CD4-positive, alpha-beta memory T cell (primary cell): ENCODE measurements at regions of chr3 and their contacts with region 1.

Region 1: DNA sequence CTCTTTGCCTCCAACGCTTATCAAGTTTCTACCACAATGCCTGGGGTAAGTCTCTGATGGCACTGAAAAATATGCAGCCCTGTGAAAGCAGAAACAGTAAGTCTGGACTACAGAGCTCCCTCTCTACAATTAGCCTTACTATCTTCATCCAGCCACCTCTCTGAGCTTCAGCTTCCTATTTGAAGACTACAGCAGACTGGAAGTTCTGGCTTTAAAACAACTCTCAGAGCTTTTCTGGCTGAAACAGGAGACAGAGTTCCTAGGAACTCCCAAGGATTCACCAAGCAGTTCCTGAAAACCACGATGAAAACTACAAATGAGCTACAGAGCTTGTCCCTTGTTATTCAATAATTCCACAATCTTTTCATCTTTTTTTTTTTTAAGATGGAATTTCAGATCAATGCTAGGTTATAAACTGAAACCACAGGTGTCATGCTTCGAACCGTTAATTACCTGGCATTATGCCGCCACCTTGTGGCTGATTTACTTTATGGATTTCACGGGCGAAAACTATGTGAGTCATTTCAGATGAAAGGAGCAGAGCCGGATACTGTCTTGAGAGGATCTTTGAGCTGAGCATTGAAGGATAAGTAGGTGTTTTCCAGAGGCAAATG is 3.9 kb downstream of the CRYGS start:
- DNase-seq: peak; percentile 78 to 85 (median 82)
- H3K4me3 ChIP-seq: no peak overlapping the region
- H3K4me3 Mint-ChIP-seq: peak overlapping the region in 3 of 8 donors; percentile 2 to 48 (median 36)
- H3K27ac ChIP-seq: no peak overlapping the region
- H3K27ac Mint-ChIP-seq: peak overlapping the region in 6 of 7 donors; percentile 11 to 53 (median 47)
- H3K4me1 ChIP-seq: peaks cover 9% of the 10 kb centered on the region
- H3K4me1 Mint-ChIP-seq: peaks cover 6 to 15% (median 10%) of the 10 kb centered on the region in 4 donors
- H3K27me3 ChIP-seq: no peaks in the 10 kb centered on the region
- H3K27me3 Mint-ChIP-seq: no peaks in the 10 kb centered on the region

Region 2: DNA sequence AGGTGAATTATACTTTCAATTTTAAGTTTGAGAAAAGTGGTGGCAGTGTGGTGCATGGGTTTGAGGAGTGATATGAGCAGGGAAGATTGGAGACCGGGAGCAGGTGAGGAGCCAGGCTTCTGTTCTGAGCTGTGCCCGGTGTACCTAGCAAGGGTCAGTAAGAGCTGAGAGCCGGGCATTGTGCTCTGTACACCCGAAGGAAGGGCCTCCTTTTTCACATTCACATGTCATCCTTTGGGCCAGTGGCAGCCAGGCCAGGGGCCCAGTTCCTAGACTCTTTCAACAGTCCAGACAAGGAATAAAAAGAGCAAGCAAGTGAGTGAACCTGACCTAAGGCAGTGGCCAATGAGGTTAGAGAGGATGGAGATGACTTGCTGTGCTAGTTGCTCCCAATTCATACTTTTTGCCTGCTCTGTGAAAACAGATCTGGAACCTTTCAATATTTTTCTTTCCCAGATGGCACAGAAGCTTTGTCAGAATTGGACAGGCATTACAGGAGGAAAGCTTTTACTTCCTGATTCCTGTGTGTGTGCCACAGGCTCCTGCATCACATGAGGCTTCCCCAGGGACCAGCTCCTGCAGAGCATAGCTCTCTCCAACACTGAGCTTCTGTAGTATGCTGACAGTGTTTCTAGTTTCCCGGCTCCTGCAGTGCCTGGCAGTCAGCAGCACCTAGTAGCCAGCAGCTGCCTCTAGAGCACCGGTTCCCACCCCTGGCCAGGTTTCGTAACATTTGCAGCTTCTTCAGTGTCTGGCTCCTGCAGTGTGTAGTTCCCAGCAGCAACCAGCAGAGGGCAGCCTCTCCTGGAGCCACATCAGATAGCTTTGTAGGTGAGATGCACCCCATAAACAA is 597.2 kb before region 1 on chr3:
- CTCF ChIA-PET with region 1: interaction called, 24 read pairs
- POLR2A ChIA-PET with region 1: interaction called, 7 read pairs
- intact Hi-C with region 1: no loop called
- DNase-seq: peak; percentile 81 to 84 (median 83)
- H3K4me3 ChIP-seq: peak overlapping the region in 1 of 2 donors; percentile 55
- H3K4me3 Mint-ChIP-seq: peak overlapping the region; percentile 43 to 76 (median 66)
- H3K27ac ChIP-seq: no peak overlapping the region
- H3K27ac Mint-ChIP-seq: peak overlapping the region in 5 of 7 donors; percentile 32 to 75 (median 62)
- H3K4me1 ChIP-seq: peaks cover 14% of the 10 kb centered on the region
- H3K4me1 Mint-ChIP-seq: peaks cover 6 to 24% (median 14%) of the 10 kb centered on the region in 4 donors
- H3K27me3 ChIP-seq: no peaks in the 10 kb centered on the region
- H3K27me3 Mint-ChIP-seq: peaks cover 2 to 3% of the 10 kb centered on the region in 2 donors

Region 3: DNA sequence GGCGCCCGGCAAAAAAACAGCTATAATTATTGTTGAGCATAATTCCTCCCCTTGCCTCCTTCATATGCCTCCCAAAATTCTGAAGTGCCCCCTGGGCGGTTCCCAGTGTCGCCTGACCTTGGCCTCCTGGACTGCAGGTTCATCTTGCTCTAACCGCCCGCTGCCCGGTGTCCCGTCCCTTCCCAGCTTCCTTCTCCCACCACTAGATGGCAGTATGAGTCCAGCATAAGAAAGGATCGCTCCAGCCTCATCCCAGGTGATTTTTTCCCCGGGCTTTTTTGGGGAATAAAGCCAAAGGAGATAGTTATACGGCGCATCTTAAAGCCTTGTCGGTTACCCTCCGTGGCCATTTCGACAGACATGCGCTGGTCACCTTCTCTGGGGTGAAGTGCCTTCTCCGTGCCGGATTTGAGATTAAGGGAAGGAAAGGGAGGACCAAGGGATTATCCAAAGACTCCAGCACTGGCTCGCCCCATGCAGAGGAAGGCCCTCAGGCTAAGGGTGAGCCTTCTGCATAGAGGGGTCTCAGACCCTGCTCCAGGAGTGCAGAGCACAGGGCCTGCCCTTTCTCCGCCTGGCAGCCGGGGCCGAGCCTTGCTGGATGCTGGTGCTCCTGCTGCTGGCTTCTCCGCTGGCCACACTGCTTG is 556.7 kb before region 1 on chr3:
- CTCF ChIA-PET with region 1: interaction called, 185 read pairs
- POLR2A ChIA-PET with region 1: interaction called, 3 read pairs
- intact Hi-C with region 1: loop called (anchors 1 kb)
- DNase-seq: peak in 4 of 5 donors; percentile 47 to 62 (median 51)
- H3K4me3 ChIP-seq: no peak overlapping the region
- H3K4me3 Mint-ChIP-seq: peak overlapping the region in 1 of 8 donors; percentile 11
- H3K27ac ChIP-seq: no peak overlapping the region
- H3K27ac Mint-ChIP-seq: no peak overlapping the region
- H3K4me1 ChIP-seq: peaks cover 3% of the 10 kb centered on the region
- H3K4me1 Mint-ChIP-seq: peaks cover 0 to 8% (median 2%) of the 10 kb centered on the region in 4 donors
- H3K27me3 ChIP-seq: no peaks in the 10 kb centered on the region
- H3K27me3 Mint-ChIP-seq: peaks cover 4% of the 10 kb centered on the region in 2 donors

Region 4: GRCh38 chr3:186466391-186466974 is 73.8 kb before region 1 on chr3:
- CTCF ChIA-PET with region 1: interaction called, 16 read pairs
- POLR2A ChIA-PET with region 1: no interaction called
- intact Hi-C with region 1: no loop called
- DNase-seq: no peak
- H3K4me3 ChIP-seq: no peak overlapping the region
- H3K4me3 Mint-ChIP-seq: no peak overlapping the region
- H3K27ac ChIP-seq: no peak overlapping the region
- H3K27ac Mint-ChIP-seq: no peak overlapping the region
- H3K4me1 ChIP-seq: no peaks in the 10 kb centered on the region
- H3K4me1 Mint-ChIP-seq: peaks cover 0 to 4% (median 0%) of the 10 kb centered on the region in 4 donors
- H3K27me3 ChIP-seq: no peaks in the 10 kb centered on the region
- H3K27me3 Mint-ChIP-seq: no peaks in the 10 kb centered on the region

Region 5: GRCh38 chr3:186515125-186515524 is 25.2 kb before region 1 on chr3:
- CTCF ChIA-PET with region 1: interaction called, 61 read pairs
- POLR2A ChIA-PET with region 1: interaction called, 26 read pairs
- intact Hi-C with region 1: loop called (anchors 2 kb)
- DNase-seq: peak; percentile 48 to 67 (median 62)
- H3K4me3 ChIP-seq: no peak overlapping the region
- H3K4me3 Mint-ChIP-seq: peak overlapping the region in 7 of 8 donors; percentile 4 to 43 (median 15)
- H3K27ac ChIP-seq: no peak overlapping the region
- H3K27ac Mint-ChIP-seq: peak overlapping the region; percentile 38 to 89 (median 84)
- H3K4me1 ChIP-seq: peaks cover 61% of the 10 kb centered on the region
- H3K4me1 Mint-ChIP-seq: peaks cover 51 to 90% (median 59%) of the 10 kb centered on the region in 4 donors
- H3K27me3 ChIP-seq: no peaks in the 10 kb centered on the region
- H3K27me3 Mint-ChIP-seq: peaks cover 0 to 2% of the 10 kb centered on the region in 2 donors

Region 6: GRCh38 chr3:186551387-186551786 is 11.1 kb after region 1 on chr3:
- CTCF ChIA-PET with region 1: interaction called, 29 read pairs
- POLR2A ChIA-PET with region 1: no interaction called
- intact Hi-C with region 1: no loop called
- DNase-seq: no peak
- H3K4me3 ChIP-seq: no peak overlapping the region
- H3K4me3 Mint-ChIP-seq: no peak overlapping the region
- H3K27ac ChIP-seq: no peak overlapping the region
- H3K27ac Mint-ChIP-seq: peak overlapping the region in 1 of 7 donors; percentile 25
- H3K4me1 ChIP-seq: no peaks in the 10 kb centered on the region
- H3K4me1 Mint-ChIP-seq: no peaks in the 10 kb centered on the region
- H3K27me3 ChIP-seq: no peaks in the 10 kb centered on the region
- H3K27me3 Mint-ChIP-seq: no peaks in the 10 kb centered on the region

Region 7: GRCh38 chr3:187223799-187224198 is 683.5 kb after region 1 on chr3:
- CTCF ChIA-PET with region 1: no interaction called
- POLR2A ChIA-PET with region 1: no interaction called
- intact Hi-C with region 1: no loop called
- DNase-seq: no peak
- H3K4me3 ChIP-seq: no peak overlapping the region
- H3K4me3 Mint-ChIP-seq: no peak overlapping the region
- H3K27ac ChIP-seq: no peak overlapping the region
- H3K27ac Mint-ChIP-seq: no peak overlapping the region
- H3K4me1 ChIP-seq: no peaks in the 10 kb centered on the region
- H3K4me1 Mint-ChIP-seq: no peaks in the 10 kb centered on the region
- H3K27me3 ChIP-seq: peaks cover 3% of the 10 kb centered on the region
- H3K27me3 Mint-ChIP-seq: peaks cover 8 to 13% of the 10 kb centered on the region in 2 donors